Posterior vena cava (tissue), 2 donors: ENCODE measurements at regions of chr18 and their contacts with region 1.

Region 1: GRCh38 chr18:75923169-75923568 is 495.7 kb upstream of the SMIM21 start:
- DNase-seq: no peak

Region 2: DNA sequence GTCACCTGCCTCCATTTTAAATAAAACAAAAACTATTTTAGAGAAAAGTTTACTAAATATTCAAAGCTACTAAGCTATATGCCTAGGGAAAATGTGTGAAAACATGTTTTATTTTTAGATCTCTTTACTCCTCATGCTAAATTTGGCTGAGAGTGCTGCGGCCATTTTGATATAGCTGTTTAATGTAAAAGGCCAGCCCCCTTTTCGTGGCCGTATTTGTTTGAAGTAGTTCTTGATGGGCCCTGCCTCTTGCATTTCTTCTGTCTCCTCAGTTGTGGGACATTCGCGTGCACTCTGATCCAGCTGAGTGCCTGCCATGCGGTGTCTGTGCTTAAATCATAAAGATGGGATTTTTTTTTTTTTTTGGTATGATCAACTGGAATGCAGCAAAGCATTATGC is 1261.5 kb before region 1 on chr18:
- intact Hi-C with region 1: loop called in 1 of 2 experiments (anchors 5 kb)
- DNase-seq: no peak

Region 3: GRCh38 chr18:74702950-74703349 is 1220.2 kb before region 1 on chr18:
- intact Hi-C with region 1: no loop called
- DNase-seq: no peak